ENCODE measurements at regions of chr2 and their contacts with region 1.

Region 1: DNA sequence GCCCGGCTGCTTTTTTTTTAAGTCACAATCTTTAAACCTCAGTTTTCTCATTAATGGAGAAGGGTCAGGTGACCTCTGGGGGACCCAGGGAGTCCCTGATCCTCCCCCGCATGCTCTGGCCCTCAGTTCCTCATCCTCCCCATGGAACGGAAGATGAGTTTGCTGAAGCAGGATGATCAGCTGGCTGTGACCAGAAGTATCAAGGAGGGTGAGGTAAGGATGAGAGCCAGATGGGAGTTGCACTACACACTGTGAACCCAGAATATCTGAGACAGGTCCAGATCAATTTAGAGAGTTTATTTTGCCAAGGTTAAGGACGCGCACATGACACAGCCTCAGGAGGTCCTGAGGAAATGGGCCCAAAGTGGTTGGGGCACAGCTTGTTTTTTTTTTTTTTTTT is 3.8 kb downstream of the CATIP start:
- DNase-seq: no peak
- ATAC-seq: peak; percentile 68
- H3K4me3 ChIP-seq: no peak overlapping the region
- H3K4me3 Mint-ChIP-seq: no peak overlapping the region
- H3K27ac ChIP-seq: no peak overlapping the region
- H3K27ac Mint-ChIP-seq: no peak overlapping the region
- H3K4me1 ChIP-seq: no peaks in the 10 kb centered on the region
- H3K4me1 Mint-ChIP-seq: peaks cover 0 to 6% (median under 1%) of the 10 kb centered on the region in 7 donors
- H3K27me3 ChIP-seq: no peaks in the 10 kb centered on the region
- H3K27me3 Mint-ChIP-seq: peaks cover 0 to 6% (median 0%) of the 10 kb centered on the region in 5 donors

Region 2: DNA sequence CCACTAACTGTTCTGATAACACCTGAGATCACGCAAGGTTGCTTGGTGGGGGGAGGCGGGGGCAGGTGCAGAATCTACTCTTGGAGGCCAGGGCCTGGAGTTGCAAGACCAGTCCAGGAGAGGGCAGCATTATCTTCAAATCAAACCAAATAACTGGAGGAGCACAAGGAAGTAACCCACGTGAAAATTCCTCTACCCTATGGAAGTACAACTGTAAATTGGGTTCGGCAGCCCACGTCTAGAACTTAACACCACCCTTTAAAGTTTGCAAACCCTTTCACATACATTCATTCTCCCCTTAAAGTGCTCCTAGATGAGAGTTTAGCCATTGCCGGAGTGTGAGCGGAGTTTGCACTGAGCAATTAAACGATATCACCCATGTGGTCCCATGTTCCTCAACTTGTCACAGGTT is 174.1 kb before region 1 on chr2:
- CTCF ChIA-PET with region 1: interaction called, 3 read pairs
- POLR2A ChIA-PET with region 1: no interaction called
- intact Hi-C with region 1: loop called (anchors 1 kb)
- DNase-seq: peak; percentile 29 to 79 (median 70)
- ATAC-seq: peak; percentile 97
- H3K4me3 ChIP-seq: no peak overlapping the region
- H3K4me3 Mint-ChIP-seq: no peak overlapping the region
- H3K27ac ChIP-seq: no peak overlapping the region
- H3K27ac Mint-ChIP-seq: peak overlapping the region in 1 of 9 donors; percentile 3
- H3K4me1 ChIP-seq: no peaks in the 10 kb centered on the region
- H3K4me1 Mint-ChIP-seq: peaks cover 0 to 14% (median 8%) of the 10 kb centered on the region in 7 donors
- H3K27me3 ChIP-seq: no peaks in the 10 kb centered on the region
- H3K27me3 Mint-ChIP-seq: peaks cover 0 to 24% (median 0%) of the 10 kb centered on the region in 5 donors

Region 3: DNA sequence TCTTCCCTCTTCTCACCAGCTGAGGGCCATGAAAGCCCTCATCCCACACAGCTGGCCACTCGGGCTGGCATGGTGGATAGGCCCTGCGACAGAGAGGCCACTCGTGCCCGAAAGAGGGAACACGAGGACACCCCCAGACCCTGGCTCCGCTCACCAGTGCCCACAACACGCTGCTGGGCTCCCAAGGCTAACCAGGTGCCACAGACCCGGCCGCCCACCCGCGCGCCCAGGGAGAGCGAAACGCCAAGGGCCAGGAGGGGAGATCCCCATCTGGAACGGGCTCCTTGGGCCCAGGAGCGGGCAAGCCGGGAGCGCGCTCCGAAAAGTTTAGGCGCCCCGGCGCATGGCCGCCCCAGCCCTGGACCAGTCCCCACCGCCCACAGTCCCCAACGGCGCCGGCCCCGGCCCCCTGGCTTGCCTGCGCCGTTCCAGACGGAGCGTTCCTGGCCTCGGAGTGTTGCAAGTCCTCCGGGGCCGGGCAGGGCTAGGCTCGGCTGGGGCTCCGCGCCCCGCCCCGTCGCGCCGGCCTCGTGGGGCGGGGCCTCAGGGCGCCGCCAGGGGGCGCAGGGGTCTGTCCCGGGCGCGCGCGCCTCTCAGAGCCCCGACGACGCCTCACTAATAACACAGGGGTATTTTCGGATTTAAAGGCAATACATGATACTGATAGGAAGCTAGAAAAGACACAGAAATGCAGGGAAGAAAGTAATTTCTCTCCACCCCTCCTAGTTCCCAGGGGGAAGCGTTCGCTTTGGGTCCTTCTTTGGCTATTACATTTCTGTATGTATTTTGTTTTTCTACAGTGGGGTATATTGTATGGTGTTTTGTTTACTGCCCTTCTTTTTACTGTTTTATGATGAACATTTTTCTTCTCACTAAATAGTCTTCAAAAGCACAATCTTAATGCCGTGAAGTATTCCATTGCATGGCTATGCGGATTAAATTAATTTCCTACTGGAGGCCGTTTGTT is 68.1 kb before region 1 on chr2 and contains the start of gene TMBIM1:
- CTCF ChIA-PET with region 1: interaction called, 67 read pairs
- POLR2A ChIA-PET with region 1: interaction called, 8 read pairs
- intact Hi-C with region 1: loop called in 1 of 2 experiments (anchors 1 kb)
- DNase-seq: peak; percentile 72 to 90 (median 83)
- ATAC-seq: peak; percentile 96
- H3K4me3 ChIP-seq: peak within 1 kb of the TSS; percentile 53
- H3K4me3 Mint-ChIP-seq: peak within 1 kb of the TSS; percentile 82 to 96 (median 92)
- H3K27ac ChIP-seq: peak within 1 kb of the TSS; percentile 93
- H3K27ac Mint-ChIP-seq: peak within 1 kb of the TSS; percentile 88 to 99 (median 98)
- H3K4me1 ChIP-seq: peaks cover 42 to 47% of the 10 kb centered on the region in 2 donors
- H3K4me1 Mint-ChIP-seq: peaks cover 32 to 61% (median 53%) of the 10 kb centered on the region in 7 donors
- H3K27me3 ChIP-seq: no peaks in the 10 kb centered on the region
- H3K27me3 Mint-ChIP-seq: peaks cover 0 to 2% (median 0%) of the 10 kb centered on the region in 5 donors
- total RNA-seq, gene TMBIM1: 51.7 to 112 (median 83.8) TPM

Region 4: GRCh38 chr2:218312267-218312756 is 48.1 kb before region 1 on chr2:
- CTCF ChIA-PET with region 1: interaction called, 33 read pairs
- POLR2A ChIA-PET with region 1: interaction called, 6 read pairs
- intact Hi-C with region 1: loop called in 1 of 2 experiments (anchors 1 kb)
- DNase-seq: no peak
- ATAC-seq: no peak
- H3K4me3 ChIP-seq: no peak overlapping the region
- H3K4me3 Mint-ChIP-seq: no peak overlapping the region
- H3K27ac ChIP-seq: no peak overlapping the region
- H3K27ac Mint-ChIP-seq: peak overlapping the region in 8 of 9 donors; percentile 36 to 88 (median 67)
- H3K4me1 ChIP-seq: peaks cover 15 to 17% of the 10 kb centered on the region in 2 donors
- H3K4me1 Mint-ChIP-seq: peaks cover 17 to 44% (median 40%) of the 10 kb centered on the region in 7 donors
- H3K27me3 ChIP-seq: no peaks in the 10 kb centered on the region
- H3K27me3 Mint-ChIP-seq: peaks cover 0 to 2% (median 0%) of the 10 kb centered on the region in 5 donors

Region 5: GRCh38 chr2:218466016-218466521 is 105.6 kb after region 1 on chr2:
- CTCF ChIA-PET with region 1: interaction called, 5 read pairs
- POLR2A ChIA-PET with region 1: no interaction called
- intact Hi-C with region 1: loop called in 1 of 2 experiments (anchors 1 kb)
- DNase-seq: peak in 3 of 9 donors; percentile 9 to 24 (median 23)
- ATAC-seq: peak; percentile 45
- H3K4me3 ChIP-seq: no peak overlapping the region
- H3K4me3 Mint-ChIP-seq: no peak overlapping the region
- H3K27ac ChIP-seq: no peak overlapping the region
- H3K27ac Mint-ChIP-seq: peak overlapping the region in 2 of 9 donors; percentile 3 to 62
- H3K4me1 ChIP-seq: peaks cover 0 to 4% of the 10 kb centered on the region in 2 donors
- H3K4me1 Mint-ChIP-seq: peaks cover 5 to 10% (median 9%) of the 10 kb centered on the region in 7 donors
- H3K27me3 ChIP-seq: no peaks in the 10 kb centered on the region
- H3K27me3 Mint-ChIP-seq: no peaks in the 10 kb centered on the region

Region 6: DNA sequence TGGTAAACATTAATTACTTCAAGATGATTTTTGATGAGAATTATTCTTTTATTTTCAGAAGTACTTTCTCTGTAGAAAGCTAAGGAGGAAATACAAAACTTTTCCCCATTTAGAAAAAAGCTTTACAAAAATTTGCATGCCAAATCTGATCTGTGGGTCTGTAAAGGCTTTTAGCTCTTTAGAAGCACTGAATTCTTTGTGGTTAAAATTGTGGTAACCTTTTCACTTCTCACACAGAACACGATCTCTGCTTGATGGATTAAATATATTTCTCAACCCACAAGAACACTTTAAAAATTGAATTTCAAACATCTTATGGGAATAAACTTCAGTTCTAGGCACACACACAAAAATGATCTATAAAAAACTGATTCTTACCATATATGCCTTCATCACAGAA is 122.2 kb after region 1 on chr2:
- CTCF ChIA-PET with region 1: no interaction called
- POLR2A ChIA-PET with region 1: no interaction called
- intact Hi-C with region 1: no loop called
- DNase-seq: peak in 3 of 9 donors; percentile 1 to 11 (median 11)
- ATAC-seq: no peak
- H3K4me3 ChIP-seq: no peak overlapping the region
- H3K4me3 Mint-ChIP-seq: peak overlapping the region in 8 of 10 donors; percentile 6 to 68 (median 52)
- H3K27ac ChIP-seq: peak overlapping the region; percentile 44
- H3K27ac Mint-ChIP-seq: peak overlapping the region in 8 of 9 donors; percentile 23 to 84 (median 78)
- H3K4me1 ChIP-seq: peaks cover 0 to 18% of the 10 kb centered on the region in 2 donors
- H3K4me1 Mint-ChIP-seq: peaks cover 13 to 41% (median 20%) of the 10 kb centered on the region in 7 donors
- H3K27me3 ChIP-seq: no peaks in the 10 kb centered on the region
- H3K27me3 Mint-ChIP-seq: no peaks in the 10 kb centered on the region